Stomach (tissue), 19 donors: ENCODE measurements at regions of chr9 and their contacts with region 1.

Region 1: GRCh38 chr9:406886-407654 is 192.4 kb downstream of the DOCK8 start:
- DNase-seq: no peak
- H3K4me3 ChIP-seq: no peak overlapping the region
- H3K27ac ChIP-seq: no peak overlapping the region
- H3K4me1 ChIP-seq: no peaks in the 10 kb centered on the region
- H3K27me3 ChIP-seq: no peaks in the 10 kb centered on the region
- CTCF ChIP-seq: no peak
- EP300 ChIP-seq: no peak
- POLR2A ChIP-seq: no peak

Region 2: GRCh38 chr9:546797-547223 is 139.7 kb after region 1 on chr9:
- intact Hi-C with region 1: loop called (anchors 10 kb)
- DNase-seq: peak in 1 of 2 donors; percentile 76
- H3K4me3 ChIP-seq: no peak overlapping the region
- H3K27ac ChIP-seq: peak overlapping the region in 4 of 5 donors; percentile 17 to 52 (median 31)
- H3K4me1 ChIP-seq: peaks cover 23 to 60% (median 39%) of the 10 kb centered on the region in 4 donors
- H3K27me3 ChIP-seq: no peaks in the 10 kb centered on the region
- CTCF ChIP-seq: peak in 1 of 7 experiments; percentile 36
- EP300 ChIP-seq: no peak
- POLR2A ChIP-seq: no peak

Region 3: DNA sequence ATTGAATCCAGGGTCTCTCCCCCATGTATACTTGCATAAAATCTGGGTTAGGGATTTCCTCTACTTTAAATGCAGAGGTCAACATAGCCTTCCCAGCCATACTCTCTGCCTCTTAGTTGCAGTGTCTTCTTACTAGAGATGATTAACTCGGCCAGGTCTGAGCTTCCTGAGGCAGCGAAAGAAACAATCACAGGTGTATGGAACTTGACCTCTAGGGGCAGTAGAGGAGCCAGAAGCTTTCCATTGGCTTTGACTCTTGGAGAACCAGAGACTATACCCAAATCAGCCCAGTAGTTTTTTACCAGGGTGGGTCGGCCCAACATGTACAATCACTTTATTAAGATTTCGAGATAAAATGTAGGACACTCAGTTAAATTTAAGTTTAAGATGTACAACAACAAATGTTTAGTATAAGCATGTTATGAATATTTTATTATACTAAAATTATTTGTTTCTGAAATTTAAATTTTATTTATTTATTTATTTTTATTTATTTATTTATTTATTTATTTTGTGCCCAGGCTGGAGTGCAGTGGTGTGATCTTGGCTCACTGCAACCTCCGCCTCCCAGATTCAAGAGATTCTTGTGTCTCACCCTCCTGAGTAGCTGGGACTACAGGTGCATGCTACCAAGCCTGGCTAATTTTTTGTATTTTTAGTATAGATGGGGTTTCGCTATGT is 521.4 kb after region 1 on chr9:
- intact Hi-C with region 1: no loop called
- DNase-seq: peak in 1 of 2 donors; percentile 36
- H3K4me3 ChIP-seq: no peak overlapping the region
- H3K27ac ChIP-seq: no peak overlapping the region
- H3K4me1 ChIP-seq: no peaks in the 10 kb centered on the region
- H3K27me3 ChIP-seq: peaks cover 0 to 37% (median 0%) of the 10 kb centered on the region in 3 donors
- CTCF ChIP-seq: no peak
- EP300 ChIP-seq: no peak
- POLR2A ChIP-seq: no peak